ENCODE measurements at regions of chr13 and their contacts with region 1.

Region 1: DNA sequence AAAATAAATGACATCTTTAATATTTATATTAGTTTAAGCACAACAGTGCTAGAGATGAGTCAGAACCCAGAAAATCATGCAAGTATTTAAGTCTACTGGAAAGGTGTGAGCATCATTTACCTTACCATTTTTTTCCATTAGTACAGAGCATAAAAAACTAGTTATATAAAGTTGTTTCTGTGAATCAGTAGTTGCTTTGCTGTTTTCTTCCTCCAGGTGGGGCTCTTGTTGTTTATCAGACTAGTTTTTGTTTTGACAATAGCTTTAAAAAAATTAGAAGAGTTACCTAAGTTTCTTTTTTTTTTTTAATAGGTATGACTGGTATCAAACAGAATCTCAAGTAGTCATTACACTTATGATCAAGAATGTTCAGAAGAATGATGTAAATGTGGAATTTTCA is 12.7 kb downstream of the SUGT1 start:
- DNase-seq: peak; percentile 46
- H3K4me3 ChIP-seq: no peak overlapping the region
- H3K27ac ChIP-seq: no peak overlapping the region
- H3K4me1 ChIP-seq: no peaks in the 10 kb centered on the region
- H3K27me3 ChIP-seq: no peaks in the 10 kb centered on the region
- CTCF ChIP-seq: peak in 1 of 2 donors; percentile 34
- POLR2A ChIP-seq: no peak

Region 2: DNA sequence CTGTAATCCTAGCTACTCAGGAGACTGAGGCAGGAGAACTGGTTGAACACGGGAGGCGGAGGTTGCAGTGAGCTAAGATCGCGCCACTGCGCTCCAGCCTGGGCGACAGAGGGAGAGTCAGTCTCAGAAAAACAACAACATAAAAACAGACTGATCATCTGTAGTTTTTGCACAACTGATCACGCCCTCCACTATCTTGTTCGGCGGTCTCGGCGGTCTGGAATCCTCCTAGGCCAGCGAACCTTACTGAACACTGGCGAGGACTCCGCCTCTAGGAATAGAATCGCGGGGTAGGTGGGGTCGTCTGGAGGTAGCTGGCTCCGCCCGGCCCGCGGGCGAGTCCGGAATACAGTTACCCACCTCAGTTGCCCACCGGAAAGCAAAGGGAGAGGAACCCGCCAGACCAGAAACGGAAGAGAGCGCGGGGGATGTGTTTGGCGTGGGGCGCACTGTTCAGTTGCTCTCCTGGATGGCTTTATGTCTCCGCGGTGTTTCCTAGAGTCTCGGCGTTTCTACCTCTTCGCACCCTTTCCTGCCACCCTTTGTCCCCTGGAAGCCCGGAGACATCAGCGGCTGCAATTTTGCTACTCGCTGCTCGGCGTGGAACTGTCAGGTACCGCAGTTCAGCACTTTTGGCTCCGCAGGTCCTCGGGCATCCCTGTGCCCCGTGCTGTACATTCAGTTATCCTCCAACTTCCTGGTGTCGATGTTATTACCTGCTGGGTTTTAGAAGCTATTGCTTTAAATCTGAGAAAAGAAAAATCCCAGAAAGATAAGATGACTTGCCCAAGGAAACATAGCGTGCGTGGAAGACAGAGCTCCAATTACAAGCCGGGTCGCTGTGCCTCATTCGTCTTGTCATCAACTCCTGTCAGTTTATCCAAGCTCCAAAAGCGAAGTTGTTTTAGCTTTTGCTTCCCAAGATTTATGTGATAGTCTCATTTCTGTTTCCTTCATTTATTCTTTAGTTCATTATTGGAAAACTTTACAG is 48.0 kb before region 1 on chr13:
- CTCF ChIA-PET with region 1: interaction called, 10 read pairs
- POLR2A ChIA-PET with region 1: no interaction called
- dilution Hi-C with region 1: no loop called
- intact Hi-C with region 1: no loop called
- DNase-seq: peak; percentile 62
- H3K4me3 ChIP-seq: peak overlapping the region; percentile 45 to 98 (median 94)
- H3K27ac ChIP-seq: peak overlapping the region; percentile 61
- H3K4me1 ChIP-seq: peaks cover 12% of the 10 kb centered on the region
- H3K27me3 ChIP-seq: no peaks in the 10 kb centered on the region
- CTCF ChIP-seq: no peak
- POLR2A ChIP-seq: peak; percentile 65

Region 3: DNA sequence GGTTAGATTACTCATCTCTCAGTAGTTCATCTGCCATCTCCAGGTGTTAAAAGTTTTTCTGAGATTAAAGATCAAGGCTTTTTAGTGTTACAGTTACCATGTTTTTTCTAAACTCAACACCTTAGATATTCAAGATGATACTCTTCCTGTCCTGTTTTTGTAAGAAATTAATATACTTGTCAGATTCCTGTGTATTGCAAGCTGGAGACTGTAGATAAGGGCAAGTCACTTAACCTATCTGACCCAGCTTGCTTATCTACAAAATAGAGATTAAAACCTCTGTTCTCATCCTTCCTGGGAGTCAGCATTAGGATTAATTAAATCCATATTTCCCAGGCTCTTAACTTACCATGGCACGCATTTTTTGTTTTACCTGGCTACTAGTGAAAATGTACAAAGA is 12.5 kb after region 1 on chr13:
- CTCF ChIA-PET with region 1: interaction called, 20 read pairs
- POLR2A ChIA-PET with region 1: no interaction called
- dilution Hi-C with region 1: no loop called
- intact Hi-C with region 1: no loop called
- DNase-seq: no peak
- H3K4me3 ChIP-seq: no peak overlapping the region
- H3K27ac ChIP-seq: no peak overlapping the region
- H3K4me1 ChIP-seq: no peaks in the 10 kb centered on the region
- H3K27me3 ChIP-seq: no peaks in the 10 kb centered on the region
- CTCF ChIP-seq: no peak
- POLR2A ChIP-seq: no peak

Region 4: GRCh38 chr13:52713894-52714293 is 48.6 kb after region 1 on chr13:
- CTCF ChIA-PET with region 1: interaction called, 12 read pairs
- POLR2A ChIA-PET with region 1: no interaction called
- dilution Hi-C with region 1: no loop called
- intact Hi-C with region 1: no loop called
- DNase-seq: no peak
- H3K4me3 ChIP-seq: no peak overlapping the region
- H3K27ac ChIP-seq: no peak overlapping the region
- H3K4me1 ChIP-seq: no peaks in the 10 kb centered on the region
- H3K27me3 ChIP-seq: peaks cover 3% of the 10 kb centered on the region in 2 experiments
- CTCF ChIP-seq: no peak
- POLR2A ChIP-seq: no peak

Region 5: GRCh38 chr13:52809310-52809769 is 144.0 kb after region 1 on chr13:
- CTCF ChIA-PET with region 1: interaction called, 28 read pairs
- POLR2A ChIA-PET with region 1: no interaction called
- dilution Hi-C with region 1: no loop called
- intact Hi-C with region 1: loop called (anchors 1 kb)
- DNase-seq: peak; percentile 84
- H3K4me3 ChIP-seq: no peak overlapping the region
- H3K27ac ChIP-seq: no peak overlapping the region
- H3K4me1 ChIP-seq: peaks cover 5% of the 10 kb centered on the region
- H3K27me3 ChIP-seq: peaks cover 0 to 8% of the 10 kb centered on the region in 2 experiments
- CTCF ChIP-seq: peak; percentile 62 to 74
- POLR2A ChIP-seq: no peak

Region 6: GRCh38 chr13:52850396-52851136 is 185.2 kb after region 1 on chr13:
- CTCF ChIA-PET with region 1: interaction called, 24 read pairs
- POLR2A ChIA-PET with region 1: no interaction called
- dilution Hi-C with region 1: no loop called
- intact Hi-C with region 1: no loop called
- DNase-seq: peak; percentile 20
- H3K4me3 ChIP-seq: peak overlapping the region; percentile 42 to 56 (median 45)
- H3K27ac ChIP-seq: no peak overlapping the region
- H3K4me1 ChIP-seq: peaks cover 5% of the 10 kb centered on the region
- H3K27me3 ChIP-seq: peaks cover 48 to 70% of the 10 kb centered on the region in 2 experiments
- CTCF ChIP-seq: no peak
- POLR2A ChIP-seq: no peak

Region 7: GRCh38 chr13:53250266-53250875 is 585.0 kb after region 1 on chr13:
- CTCF ChIA-PET with region 1: interaction called, 10 read pairs
- POLR2A ChIA-PET with region 1: no interaction called
- dilution Hi-C with region 1: no loop called
- intact Hi-C with region 1: no loop called
- DNase-seq: peak; percentile 63
- H3K4me3 ChIP-seq: no peak overlapping the region
- H3K27ac ChIP-seq: no peak overlapping the region
- H3K4me1 ChIP-seq: no peaks in the 10 kb centered on the region
- H3K27me3 ChIP-seq: no peaks in the 10 kb centered on the region
- CTCF ChIP-seq: peak; percentile 43 to 47
- POLR2A ChIP-seq: no peak

Region 8: DNA sequence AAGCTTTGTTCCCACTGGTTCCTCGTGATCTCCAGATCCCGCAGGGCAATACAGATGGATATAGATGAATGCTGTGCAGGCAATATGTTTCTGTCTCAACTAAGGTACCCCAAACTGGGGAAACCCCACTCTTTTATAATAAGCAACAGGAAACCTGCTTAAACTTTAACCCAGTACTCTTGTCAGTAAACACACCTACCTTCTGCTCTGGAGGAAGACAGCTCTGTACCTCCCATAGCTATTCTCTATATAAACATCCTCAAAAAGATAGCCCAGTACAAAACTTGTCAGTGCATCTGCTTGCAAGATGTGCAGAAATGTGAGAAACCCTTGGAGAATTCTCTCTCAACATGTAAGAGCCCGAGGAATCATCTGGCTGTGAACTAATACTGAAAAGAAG is 946.9 kb after region 1 on chr13:
- CTCF ChIA-PET with region 1: no interaction called
- POLR2A ChIA-PET with region 1: no interaction called
- dilution Hi-C with region 1: no loop called
- intact Hi-C with region 1: no loop called
- DNase-seq: no peak
- H3K4me3 ChIP-seq: no peak overlapping the region
- H3K27ac ChIP-seq: no peak overlapping the region
- H3K4me1 ChIP-seq: no peaks in the 10 kb centered on the region
- H3K27me3 ChIP-seq: no peaks in the 10 kb centered on the region
- CTCF ChIP-seq: no peak
- POLR2A ChIP-seq: no peak

Measured in endothelial cell of umbilical vein (primary cell).